Head of caudate nucleus (tissue), 42 donors: ENCODE measurements at regions of chr1 and their contacts with region 1.

Region 1: GRCh38 chr1:16618719-16619118 is 5.4 kb upstream of the NBPF1 start:
- DNase-seq: peak in 27 of 42 donors; percentile 3 to 85 (median 54)

Region 2: DNA sequence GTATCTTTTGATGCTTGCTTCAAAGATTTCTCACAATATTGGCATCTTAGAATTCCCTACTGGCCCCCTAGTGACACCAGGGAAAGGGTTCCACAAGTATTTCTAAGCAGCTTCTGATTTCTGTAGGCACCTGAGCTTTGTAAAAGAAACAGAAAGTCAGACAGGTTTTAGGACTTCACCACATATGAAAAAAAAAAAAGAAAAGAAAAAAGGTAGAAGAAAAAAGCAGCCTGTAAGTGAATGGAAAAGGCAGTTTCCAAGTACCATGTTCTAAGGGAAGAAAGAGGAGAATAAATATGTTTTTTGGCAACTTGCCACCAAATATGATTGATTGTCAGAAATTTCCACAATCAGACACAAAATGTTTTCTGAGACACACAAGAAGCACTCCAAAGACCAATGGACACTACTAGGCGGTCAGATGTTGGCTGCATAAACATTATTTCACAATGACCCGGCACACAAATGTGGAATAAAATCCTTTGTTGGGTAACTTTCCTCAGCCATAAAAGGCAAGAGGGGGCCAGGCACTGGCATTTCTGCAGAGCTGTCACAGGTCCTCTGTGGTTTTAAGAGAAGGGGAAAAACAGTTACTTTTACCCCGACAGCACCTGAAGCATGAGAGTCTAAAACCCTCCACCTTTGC is 369.0 kb before region 1 on chr1:
- intact Hi-C with region 1: no loop called
- DNase-seq: no peak

Region 3: DNA sequence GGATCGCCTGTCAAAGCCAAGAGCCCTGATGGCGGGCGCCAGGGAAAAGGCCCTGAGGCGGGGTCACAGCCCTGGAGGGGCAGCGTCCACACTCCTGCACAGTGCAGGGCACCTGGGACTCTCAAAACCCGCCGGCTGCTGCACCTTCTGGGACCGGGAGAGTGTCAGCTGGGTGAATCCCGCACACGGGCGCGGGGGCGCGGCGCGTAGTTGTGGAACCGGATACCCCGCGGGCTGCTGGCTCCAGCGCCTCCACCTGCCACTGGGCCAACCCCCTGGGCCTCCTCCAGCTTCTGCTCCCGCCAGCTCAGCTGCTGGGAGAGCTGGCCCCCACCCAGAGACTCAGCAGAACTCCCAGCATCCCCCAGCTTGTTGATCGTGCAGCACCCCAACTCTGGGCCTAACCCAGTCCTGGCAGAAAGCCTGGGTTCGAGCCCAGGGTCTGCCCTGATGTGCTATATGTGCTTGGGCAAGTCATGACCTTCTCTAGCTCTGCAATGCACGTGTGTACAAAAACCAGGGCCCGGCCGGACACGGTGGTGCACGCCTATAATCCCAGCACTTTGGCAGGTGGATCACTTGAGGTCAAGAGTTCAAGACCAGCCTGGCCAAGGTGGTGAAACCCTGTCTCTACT is 144.4 kb before region 1 on chr1:
- intact Hi-C with region 1: no loop called
- DNase-seq: peak in 1 of 42 donors; percentile 9

Region 4: DNA sequence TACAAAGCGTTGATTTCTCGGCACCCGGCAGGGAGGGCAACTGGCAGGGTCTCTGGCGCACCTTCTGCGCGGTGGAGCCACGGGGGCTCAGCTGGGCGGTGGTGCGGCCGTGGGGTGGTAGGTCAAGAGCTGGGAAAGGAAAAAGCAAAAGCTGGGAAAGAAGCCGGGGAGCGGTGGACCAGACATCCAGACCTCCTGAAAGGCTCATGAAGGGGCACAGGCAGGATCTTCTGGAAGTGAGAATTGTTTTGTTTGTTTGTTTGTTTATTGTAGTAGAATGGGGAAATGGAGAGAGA is 97.5 kb before region 1 on chr1:
- intact Hi-C with region 1: no loop called
- DNase-seq: no peak

Region 5: GRCh38 chr1:16946646-16947045 is 327.9 kb after region 1 on chr1:
- intact Hi-C with region 1: loop called (anchors 1 kb)
- DNase-seq: no peak